ENCODE measurements at regions of chr16 and their contacts with region 1.

Region 1: GRCh38 chr16:53022374-53022773 is 30.3 kb downstream of the CHD9NB start:
- DNase-seq: peak; percentile 65
- H3K4me3 Mint-ChIP-seq: no peak overlapping the region
- H3K27ac Mint-ChIP-seq: no peak overlapping the region
- H3K4me1 Mint-ChIP-seq: peaks cover 7% of the 10 kb centered on the region
- H3K27me3 Mint-ChIP-seq: no peaks in the 10 kb centered on the region
- CTCF ChIP-seq: peak; percentile 74

Region 2: DNA sequence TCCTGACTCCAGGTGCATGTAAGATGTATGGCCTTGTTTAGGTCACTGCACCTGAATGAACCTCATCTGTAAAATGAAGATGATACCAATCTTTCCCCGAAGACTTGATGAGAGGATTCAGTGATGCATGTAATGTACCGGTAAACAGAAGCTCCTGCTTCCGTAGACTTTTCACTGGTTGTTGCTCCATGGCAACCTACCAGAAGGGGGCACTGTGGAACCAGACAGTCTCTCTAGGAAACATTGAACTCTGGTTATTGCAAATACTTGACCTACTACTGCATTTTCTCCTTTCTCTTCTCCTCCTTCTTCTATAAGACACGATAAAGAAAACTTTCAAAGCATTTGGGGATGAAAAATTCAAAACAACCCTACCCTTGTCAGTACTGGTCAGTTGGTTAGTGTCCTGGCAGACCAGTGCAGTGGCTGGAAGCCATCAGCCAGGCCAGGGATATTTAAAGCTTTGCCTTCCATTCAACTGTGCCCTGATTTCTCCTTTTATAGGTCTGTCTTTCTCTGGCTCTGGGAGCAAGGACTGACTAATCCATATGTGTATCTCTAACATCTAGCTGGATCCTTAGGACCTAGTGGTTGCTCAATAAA is 1203.9 kb before region 1 on chr16:
- CTCF ChIA-PET with region 1: interaction called, 3 read pairs
- POLR2A ChIA-PET with region 1: no interaction called
- intact Hi-C with region 1: loop called (anchors 2 kb)
- DNase-seq: peak; percentile 69
- H3K4me3 Mint-ChIP-seq: no peak overlapping the region
- H3K27ac Mint-ChIP-seq: no peak overlapping the region
- H3K4me1 Mint-ChIP-seq: peaks cover 7% of the 10 kb centered on the region
- H3K27me3 Mint-ChIP-seq: no peaks in the 10 kb centered on the region
- CTCF ChIP-seq: peak; percentile 77

Region 3: GRCh38 chr16:52191531-52192134 is 830.7 kb before region 1 on chr16:
- CTCF ChIA-PET with region 1: interaction called, 26 read pairs
- POLR2A ChIA-PET with region 1: no interaction called
- intact Hi-C with region 1: loop called (anchors 1 kb)
- DNase-seq: peak; percentile 65
- H3K4me3 Mint-ChIP-seq: no peak overlapping the region
- H3K27ac Mint-ChIP-seq: no peak overlapping the region
- H3K4me1 Mint-ChIP-seq: no peaks in the 10 kb centered on the region
- H3K27me3 Mint-ChIP-seq: peaks cover 13% of the 10 kb centered on the region
- CTCF ChIP-seq: peak; percentile 74

Region 4: GRCh38 chr16:52912565-52913173 is 109.7 kb before region 1 on chr16:
- CTCF ChIA-PET with region 1: interaction called, 54 read pairs
- POLR2A ChIA-PET with region 1: no interaction called
- intact Hi-C with region 1: loop called (anchors 1 kb)
- DNase-seq: peak; percentile 78
- H3K4me3 Mint-ChIP-seq: no peak overlapping the region
- H3K27ac Mint-ChIP-seq: no peak overlapping the region
- H3K4me1 Mint-ChIP-seq: no peaks in the 10 kb centered on the region
- H3K27me3 Mint-ChIP-seq: peaks cover 30% of the 10 kb centered on the region
- CTCF ChIP-seq: peak; percentile 82

Region 5: GRCh38 chr16:53007095-53007494 is 15.3 kb before region 1 on chr16:
- CTCF ChIA-PET with region 1: interaction called, 29 read pairs
- POLR2A ChIA-PET with region 1: no interaction called
- intact Hi-C with region 1: no loop called
- DNase-seq: no peak
- H3K4me3 Mint-ChIP-seq: no peak overlapping the region
- H3K27ac Mint-ChIP-seq: no peak overlapping the region
- H3K4me1 Mint-ChIP-seq: no peaks in the 10 kb centered on the region
- H3K27me3 Mint-ChIP-seq: no peaks in the 10 kb centered on the region
- CTCF ChIP-seq: no peak

Region 6: DNA sequence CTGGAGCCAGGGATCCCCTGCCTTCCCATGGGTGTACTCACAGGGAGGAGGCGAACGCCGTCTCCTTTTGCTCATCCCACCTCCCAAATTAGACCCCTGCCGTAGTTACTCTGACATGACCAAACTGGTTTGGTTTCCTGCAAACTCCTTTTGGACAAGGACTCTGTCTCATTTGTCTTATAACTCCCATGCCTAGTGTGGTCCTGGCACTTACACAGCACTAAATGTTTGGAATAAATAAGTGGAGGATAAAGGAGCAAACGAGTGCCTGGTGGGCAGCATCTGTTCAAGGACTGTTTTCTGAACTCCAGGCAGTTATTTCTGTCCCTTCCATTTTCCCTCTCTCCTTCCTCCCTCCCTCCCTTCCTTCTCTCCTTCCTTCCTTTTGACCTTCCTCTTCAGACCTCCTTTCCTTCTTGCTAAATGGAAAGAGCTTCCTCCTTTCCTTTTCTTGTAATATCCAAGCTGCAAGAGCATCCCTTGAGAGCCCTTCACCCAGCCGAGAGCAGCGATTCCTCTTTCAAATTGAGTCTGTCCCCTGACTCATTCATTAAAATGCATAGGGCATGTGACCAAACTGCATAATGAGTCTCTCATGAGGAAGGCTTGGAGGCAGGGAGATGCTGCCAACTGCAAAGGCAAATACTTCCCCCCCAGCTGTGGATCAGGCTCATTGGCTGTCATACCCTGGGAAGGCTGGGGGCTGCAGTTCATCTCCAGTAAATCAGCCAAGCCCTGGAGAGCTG is 69.3 kb after region 1 on chr16:
- CTCF ChIA-PET with region 1: no interaction called
- POLR2A ChIA-PET with region 1: no interaction called
- intact Hi-C with region 1: no loop called
- DNase-seq: peak; percentile 68
- H3K4me3 Mint-ChIP-seq: peak overlapping the region; percentile 67
- H3K27ac Mint-ChIP-seq: peak overlapping the region; percentile 50
- H3K4me1 Mint-ChIP-seq: peaks cover 47% of the 10 kb centered on the region
- H3K27me3 Mint-ChIP-seq: no peaks in the 10 kb centered on the region
- CTCF ChIP-seq: no peak

Measured in MCF 10A (cell line).